ENCODE measurements at regions of chr17 and their contacts with region 1.

Region 1: DNA sequence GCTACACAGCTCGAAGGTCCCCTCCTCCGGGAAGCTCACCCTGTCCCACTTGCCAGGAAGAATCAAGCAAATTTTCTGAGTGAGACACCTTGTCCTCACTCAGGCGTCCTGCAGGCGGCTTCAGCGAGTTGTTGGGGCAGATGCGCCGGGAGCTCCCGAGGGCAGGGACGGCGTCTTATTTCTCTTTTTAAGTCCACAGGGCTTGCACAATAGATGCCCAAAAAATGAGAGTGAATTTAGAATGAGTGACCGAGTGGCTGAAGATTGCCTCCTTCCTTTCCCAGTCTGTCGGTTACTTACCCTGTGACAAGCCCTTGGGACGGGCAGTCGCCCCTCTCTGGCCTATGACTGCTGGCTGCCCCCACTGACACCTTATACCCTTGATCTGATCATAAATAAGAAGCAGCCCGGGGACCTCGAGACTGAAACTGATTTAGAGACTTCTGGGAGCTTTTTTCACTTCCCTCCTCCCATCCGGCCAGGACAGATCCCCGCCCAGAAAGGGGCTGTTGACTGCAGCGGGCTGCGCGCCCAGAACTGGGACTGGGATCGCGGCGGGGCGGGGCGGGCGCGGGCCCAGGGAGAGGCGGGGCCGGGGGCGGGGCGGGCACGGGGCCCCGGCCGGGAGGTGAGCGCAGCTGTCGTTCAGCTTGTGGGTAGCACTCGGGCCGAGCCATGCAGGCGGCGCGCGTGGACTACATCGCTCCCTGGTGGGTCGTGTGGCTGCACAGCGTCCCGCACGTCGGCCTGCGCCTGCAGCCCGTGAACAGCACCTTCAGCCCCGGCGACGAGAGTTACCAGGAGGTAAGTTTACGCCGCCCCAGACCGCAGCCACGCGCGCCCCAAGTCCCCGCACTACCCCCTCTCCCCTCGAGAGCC is at the start of gene TTYH2:
- DNase-seq: no peak
- H3K4me3 ChIP-seq: peak within 1 kb of the TSS; percentile 49 to 52
- H3K27ac ChIP-seq: peak within 1 kb of the TSS; percentile 86
- H3K4me1 ChIP-seq: peaks cover 50% of the 10 kb centered on the region
- H3K27me3 ChIP-seq: no peaks in the 10 kb centered on the region
- CTCF ChIP-seq: peak in 2 of 3 experiments; percentile 21 to 25
- POLR2A ChIP-seq: no peak
- total RNA-seq, gene TTYH2: 3.4 TPM

Region 2: GRCh38 chr17:74288785-74289184 is 75.6 kb after region 1 on chr17:
- intact Hi-C with region 1: loop called (anchors 5 kb)
- DNase-seq: no peak
- H3K4me3 ChIP-seq: no peak overlapping the region
- H3K27ac ChIP-seq: no peak overlapping the region
- H3K4me1 ChIP-seq: no peaks in the 10 kb centered on the region
- H3K27me3 ChIP-seq: no peaks in the 10 kb centered on the region
- CTCF ChIP-seq: no peak
- POLR2A ChIP-seq: no peak

Region 3: GRCh38 chr17:74361230-74362068 is 148.3 kb after region 1 on chr17 and contains the start of gene BTBD17:
- intact Hi-C with region 1: loop called (anchors 5 kb)
- DNase-seq: no peak
- H3K4me3 ChIP-seq: no peak within 1 kb of the TSS
- H3K27ac ChIP-seq: no peak within 1 kb of the TSS
- H3K4me1 ChIP-seq: peaks cover 24% of the 10 kb centered on the region
- H3K27me3 ChIP-seq: no peaks in the 10 kb centered on the region
- CTCF ChIP-seq: peak; percentile 10 to 64 (median 49)
- POLR2A ChIP-seq: no peak
- total RNA-seq, gene BTBD17: not detected

Region 4: DNA sequence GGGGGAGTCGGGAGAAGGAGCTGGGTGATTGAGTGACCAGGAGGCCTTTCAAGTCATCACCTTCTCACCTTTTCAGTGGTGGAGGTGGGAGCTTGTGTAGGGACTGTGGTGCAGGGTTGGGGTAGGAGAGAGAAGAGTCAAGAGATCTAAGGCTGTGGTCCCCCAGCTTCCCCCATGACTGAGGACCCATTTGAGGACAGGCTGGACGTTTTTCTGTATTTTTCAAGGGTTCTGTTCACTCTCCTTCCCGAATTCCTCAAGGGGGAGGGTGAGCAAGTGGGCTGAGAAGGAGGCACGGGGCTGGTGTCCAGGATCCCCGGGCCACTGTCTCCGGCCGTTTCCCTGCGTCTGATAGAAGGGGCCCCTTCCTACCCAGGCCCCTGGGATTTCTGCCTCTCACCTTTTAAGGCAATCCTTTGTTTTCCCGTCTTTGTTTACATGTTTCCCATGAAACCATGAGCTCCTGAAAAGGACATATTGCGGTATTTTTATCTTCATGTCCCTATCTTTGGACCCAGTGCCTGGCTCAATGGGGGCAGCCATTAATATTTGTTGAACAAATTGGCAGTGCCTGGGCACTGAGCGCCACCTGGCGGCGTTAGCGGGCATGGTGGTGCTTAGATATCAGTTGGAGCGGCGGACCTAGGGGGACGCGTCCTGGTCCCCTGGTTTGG is 244.1 kb after region 1 on chr17:
- intact Hi-C with region 1: loop called (anchors 10 kb)
- DNase-seq: no peak
- H3K4me3 ChIP-seq: no peak overlapping the region
- H3K27ac ChIP-seq: no peak overlapping the region
- H3K4me1 ChIP-seq: peaks cover 37% of the 10 kb centered on the region
- H3K27me3 ChIP-seq: no peaks in the 10 kb centered on the region
- CTCF ChIP-seq: peak; percentile 95 to 98 (median 97)
- POLR2A ChIP-seq: no peak

Measured in vagina (tissue), 2 donors.